GM12878 (cell line): ENCODE measurements at regions of chr14 and their contacts with region 1.

Region 1: DNA sequence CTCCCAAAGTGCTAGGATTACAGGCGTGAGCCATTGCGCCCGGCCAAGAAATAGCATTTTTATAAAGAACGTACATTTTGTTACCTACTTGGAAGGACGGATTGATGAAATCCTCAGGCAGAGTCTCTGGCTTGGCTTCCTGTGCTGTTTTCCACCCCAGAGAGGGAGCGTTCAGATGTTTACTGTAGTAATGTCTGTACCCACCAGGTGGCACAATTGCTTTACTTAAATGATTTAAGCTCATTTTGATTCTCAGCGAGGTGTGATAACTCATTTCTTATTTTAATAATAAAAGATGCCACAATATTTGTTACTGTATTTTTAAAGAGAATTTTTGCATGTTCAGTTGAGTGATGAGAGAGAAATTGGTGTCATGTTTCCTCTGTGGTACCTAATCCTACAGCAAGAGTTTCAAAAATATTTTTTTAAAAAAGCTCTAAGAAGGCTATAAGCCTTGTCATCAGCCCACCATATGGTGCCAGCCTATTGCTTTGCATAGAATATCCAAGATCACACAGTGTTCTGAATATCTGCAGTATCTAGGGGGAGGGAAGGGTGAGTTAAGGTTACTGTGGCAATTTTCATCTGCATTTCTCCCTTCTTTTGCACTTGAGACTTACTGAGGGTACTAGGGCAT is 82.6 kb upstream of the TRAF3 start:
- DNase-seq: peak; percentile 43
- ATAC-seq: peak; percentile 87
- H3K4me3 ChIP-seq: no peak overlapping the region
- H3K27ac ChIP-seq: no peak overlapping the region; the same call in 1 of the 2 replicates
- H3K4me1 ChIP-seq: peaks cover 15% of the 10 kb centered on the region
- H3K27me3 ChIP-seq: no peaks in the 10 kb centered on the region
- CTCF ChIP-seq: peak; percentile 50 to 71 (median 64); a peak in 5 of 6 replicates
- EP300 ChIP-seq: no peak
- POLR2A ChIP-seq: no peak
- RAD21 ChIP-seq: peak; percentile 85

Region 2: GRCh38 chr14:102591889-102592763 is 102.5 kb before region 1 on chr14 and contains the start of gene RCOR1:
- CTCF ChIA-PET with region 1: interaction called, 62 read pairs
- POLR2A ChIA-PET with region 1: no interaction called
- RAD21 ChIA-PET with region 1: interaction called, 26 read pairs
- SMC1A ChIA-PET with region 1: interaction called, 42 read pairs
- in situ Hi-C with region 1: no loop called
- intact Hi-C with region 1: no loop called
- DNase-seq: peak; percentile 80
- ATAC-seq: peak; percentile 89
- H3K4me3 ChIP-seq: peak within 1 kb of the TSS; percentile 96
- H3K27ac ChIP-seq: peak within 1 kb of the TSS; percentile 92
- H3K4me1 ChIP-seq: 0 out of 2 replicates have a peak, but pooled peaks cover 4% of the 10 kb centered on the region
- H3K27me3 ChIP-seq: no peaks in the 10 kb centered on the region; a peak in 1 of 4 replicates
- CTCF ChIP-seq: no peak
- EP300 ChIP-seq: peak in 1 of 2 experiments; percentile 43; a peak in 2 of 4 replicates
- POLR2A ChIP-seq: peak; percentile 92
- RAD21 ChIP-seq: no peak
- polyA plus RNA-seq, gene RCOR1: 1.9 to 2.2 TPM

Region 3: GRCh38 chr14:102749393-102750305 is 55.0 kb after region 1 on chr14:
- CTCF ChIA-PET with region 1: interaction called, 3 read pairs
- POLR2A ChIA-PET with region 1: no interaction called
- RAD21 ChIA-PET with region 1: interaction called, 4 read pairs
- SMC1A ChIA-PET with region 1: interaction called, 14 read pairs
- in situ Hi-C with region 1: no loop called
- intact Hi-C with region 1: no loop called
- DNase-seq: no peak
- ATAC-seq: no peak
- H3K4me3 ChIP-seq: no peak overlapping the region
- H3K27ac ChIP-seq: no peak overlapping the region
- H3K4me1 ChIP-seq: peaks cover 18% of the 10 kb centered on the region
- H3K27me3 ChIP-seq: no peaks in the 10 kb centered on the region
- CTCF ChIP-seq: no peak
- EP300 ChIP-seq: no peak
- POLR2A ChIP-seq: no peak
- RAD21 ChIP-seq: no peak

Region 4: GRCh38 chr14:102786768-102787167 is 92.1 kb after region 1 on chr14:
- CTCF ChIA-PET with region 1: interaction called, 33 read pairs
- POLR2A ChIA-PET with region 1: interaction called, 10 read pairs
- RAD21 ChIA-PET with region 1: interaction called, 23 read pairs
- SMC1A ChIA-PET with region 1: interaction called, 46 read pairs
- in situ Hi-C with region 1: no loop called
- intact Hi-C with region 1: no loop called
- DNase-seq: no peak
- ATAC-seq: peak; percentile 67
- H3K4me3 ChIP-seq: peak overlapping the region; percentile 74; the same call in 1 of the 2 replicates
- H3K27ac ChIP-seq: peak overlapping the region; percentile 81
- H3K4me1 ChIP-seq: peaks cover 27% of the 10 kb centered on the region
- H3K27me3 ChIP-seq: no peaks in the 10 kb centered on the region
- CTCF ChIP-seq: no peak
- EP300 ChIP-seq: no peak
- POLR2A ChIP-seq: peak; percentile 40; the same call in 1 of the 2 replicates
- RAD21 ChIP-seq: no peak

Region 5: GRCh38 chr14:102870994-102871831 is 176.6 kb after region 1 on chr14:
- CTCF ChIA-PET with region 1: interaction called, 6 read pairs
- POLR2A ChIA-PET with region 1: no interaction called
- RAD21 ChIA-PET with region 1: interaction called, 4 read pairs
- SMC1A ChIA-PET with region 1: interaction called, 14 read pairs
- in situ Hi-C with region 1: no loop called
- intact Hi-C with region 1: no loop called
- DNase-seq: no peak
- ATAC-seq: peak; percentile 59
- H3K4me3 ChIP-seq: no peak overlapping the region
- H3K27ac ChIP-seq: no peak overlapping the region; the same call in 1 of the 2 replicates
- H3K4me1 ChIP-seq: peaks cover 29% of the 10 kb centered on the region
- H3K27me3 ChIP-seq: no peaks in the 10 kb centered on the region
- CTCF ChIP-seq: no peak
- EP300 ChIP-seq: no peak
- POLR2A ChIP-seq: no peak
- RAD21 ChIP-seq: no peak

Region 6: GRCh38 chr14:102924632-102925588 is 230.3 kb after region 1 on chr14:
- CTCF ChIA-PET with region 1: interaction called, 13 read pairs
- POLR2A ChIA-PET with region 1: no interaction called
- RAD21 ChIA-PET with region 1: interaction called, 13 read pairs
- SMC1A ChIA-PET with region 1: interaction called, 3 read pairs
- in situ Hi-C with region 1: no loop called
- intact Hi-C with region 1: no loop called
- DNase-seq: no peak
- ATAC-seq: no peak
- H3K4me3 ChIP-seq: no peak overlapping the region
- H3K27ac ChIP-seq: no peak overlapping the region
- H3K4me1 ChIP-seq: peaks cover 15% of the 10 kb centered on the region
- H3K27me3 ChIP-seq: peaks cover 14 to 18% of the 10 kb centered on the region in 2 experiments
- CTCF ChIP-seq: 0 out of 6 replicates have a peak, but pooled peaks of 1 of the 3 experiments have one; percentile 3
- EP300 ChIP-seq: no peak
- POLR2A ChIP-seq: no peak
- RAD21 ChIP-seq: no peak

Region 7: GRCh38 chr14:103104654-103105452 is 410.2 kb after region 1 on chr14:
- CTCF ChIA-PET with region 1: interaction called, 9 read pairs
- POLR2A ChIA-PET with region 1: no interaction called
- RAD21 ChIA-PET with region 1: interaction called, 14 read pairs
- SMC1A ChIA-PET with region 1: interaction called, 10 read pairs
- in situ Hi-C with region 1: no loop called
- intact Hi-C with region 1: no loop called
- DNase-seq: no peak
- ATAC-seq: peak; percentile 83
- H3K4me3 ChIP-seq: no peak overlapping the region
- H3K27ac ChIP-seq: no peak overlapping the region
- H3K4me1 ChIP-seq: peaks cover 42% of the 10 kb centered on the region
- H3K27me3 ChIP-seq: peaks cover 5 to 11% of the 10 kb centered on the region in 2 experiments; a peak in 2 of 4 replicates
- CTCF ChIP-seq: peak; percentile 96 to 98 (median 98)
- EP300 ChIP-seq: no peak
- POLR2A ChIP-seq: no peak
- RAD21 ChIP-seq: peak; percentile 93